ENCODE measurements at regions of chr1 and their contacts with region 1.

Region 1: GRCh38 chr1:39845275-39846116 is 37.8 kb downstream of the TRIT1 start:
- DNase-seq: peak; percentile 75
- H3K4me3 ChIP-seq: peak overlapping the region; percentile 31
- H3K27ac ChIP-seq: peak overlapping the region; percentile 87
- H3K27me3 ChIP-seq: no peaks in the 10 kb centered on the region
- CTCF ChIP-seq: no peak

Region 2: GRCh38 chr1:39788758-39789570 is 56.5 kb before region 1 on chr1 and contains the start of gene BMP8B:
- CTCF ChIA-PET with region 1: no interaction called
- POLR2A ChIA-PET with region 1: no interaction called
- DNase-seq: no peak
- H3K4me3 ChIP-seq: peak within 1 kb of the TSS; percentile 25; the same call in 1 of the 2 replicates
- H3K27ac ChIP-seq: no peak within 1 kb of the TSS
- H3K27me3 ChIP-seq: peaks cover 36% of the 10 kb centered on the region
- CTCF ChIP-seq: no peak
- polyA plus RNA-seq, gene BMP8B: not detected in 2 replicates

Region 3: DNA sequence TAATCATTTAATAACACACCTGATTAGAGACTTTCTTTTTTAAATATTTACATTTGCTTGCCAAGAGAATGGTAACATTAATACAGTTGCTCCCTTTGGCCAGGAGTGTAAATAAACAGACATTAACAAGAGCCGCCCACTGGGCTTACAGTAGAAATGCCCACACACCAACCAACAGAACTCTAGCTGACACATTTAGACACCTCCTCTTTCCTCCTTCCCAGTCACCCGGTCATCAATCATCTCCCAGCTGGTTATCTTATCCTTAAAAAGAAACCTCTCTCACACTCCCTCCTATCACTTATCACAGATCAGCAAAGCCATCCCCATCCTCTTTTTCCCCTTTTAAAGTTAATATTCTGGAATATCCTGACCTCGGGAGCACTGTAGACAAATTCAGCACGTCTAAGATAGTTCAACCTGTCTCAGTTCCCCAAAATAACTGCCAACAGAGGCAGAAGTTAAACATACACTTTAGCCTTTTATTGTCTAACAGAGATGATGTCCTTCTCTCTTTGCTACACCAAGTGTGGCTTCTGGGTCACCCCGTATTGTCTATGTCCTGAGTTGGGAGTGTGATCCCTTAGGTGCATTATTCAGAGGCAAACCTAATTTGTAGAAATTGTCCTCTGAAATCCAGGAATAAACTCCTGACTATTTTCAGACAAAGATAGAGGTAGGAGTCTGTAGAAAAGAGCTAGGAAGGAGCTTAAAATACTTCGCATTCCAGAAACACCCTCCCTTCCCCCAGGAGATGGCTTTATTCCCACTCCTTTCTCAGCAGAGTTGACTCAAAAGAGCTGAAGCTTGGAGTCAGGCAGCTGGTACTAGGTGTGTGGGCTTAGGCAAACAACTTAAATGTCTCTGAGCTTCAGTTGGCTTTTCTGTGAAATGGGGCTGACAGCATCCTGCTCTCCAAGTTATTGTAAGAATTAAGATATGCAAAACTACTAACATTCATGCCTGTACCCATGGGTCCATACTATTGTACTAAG is 47.4 kb after region 1 on chr1:
- CTCF ChIA-PET with region 1: interaction called, 3 read pairs
- POLR2A ChIA-PET with region 1: interaction called, 10 read pairs
- DNase-seq: peak; percentile 48
- H3K4me3 ChIP-seq: no peak overlapping the region
- H3K27ac ChIP-seq: peak overlapping the region; percentile 13
- H3K27me3 ChIP-seq: no peaks in the 10 kb centered on the region
- CTCF ChIP-seq: no peak